CD8-positive, alpha-beta T cell (primary cell): ENCODE measurements at regions of chr5 and their contacts with region 1.

Region 1: DNA sequence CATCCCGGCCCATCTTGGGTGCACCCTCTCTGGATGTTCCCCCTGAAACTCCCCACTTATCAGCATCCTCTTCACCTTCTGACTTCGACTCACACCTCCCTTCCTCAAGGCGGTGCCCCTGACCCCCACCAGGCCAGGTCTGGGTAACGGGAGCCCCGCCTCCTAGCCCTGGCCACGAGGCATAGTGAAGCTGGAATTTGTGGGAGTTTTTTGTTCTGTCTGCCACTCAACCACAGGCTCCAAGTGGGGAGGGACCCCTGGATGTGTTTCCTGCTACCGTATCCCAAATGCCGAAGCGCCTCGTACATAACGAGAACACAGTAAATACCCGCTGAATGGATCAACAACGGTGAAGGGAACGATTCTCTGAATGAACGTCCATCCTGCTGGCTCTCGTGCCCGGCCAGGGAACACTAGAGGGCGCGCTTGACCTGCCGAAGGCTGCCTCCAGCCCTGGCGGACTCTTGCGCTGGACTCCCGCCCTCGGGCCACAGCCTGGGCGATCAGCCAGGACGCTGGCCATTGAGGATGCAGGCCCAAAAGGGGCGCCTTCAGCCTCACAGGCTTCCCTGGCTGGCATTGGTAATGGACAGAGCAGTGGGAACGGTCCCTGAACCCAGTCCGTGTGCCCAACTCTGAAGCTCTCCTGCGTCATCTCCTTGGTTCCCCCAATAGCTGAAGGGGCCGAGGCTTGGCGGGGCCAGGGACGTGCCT is 47.3 kb upstream of the PHYKPL start:
- DNase-seq: peak; percentile 31 to 78 (median 61)
- ATAC-seq: no peak
- H3K4me3 ChIP-seq: no peak overlapping the region
- H3K4me3 Mint-ChIP-seq: no peak overlapping the region
- H3K27ac ChIP-seq: no peak overlapping the region
- H3K27ac Mint-ChIP-seq: no peak overlapping the region
- H3K4me1 ChIP-seq: no peaks in the 10 kb centered on the region
- H3K4me1 Mint-ChIP-seq: peaks cover 4% of the 10 kb centered on the region
- H3K27me3 ChIP-seq: no peaks in the 10 kb centered on the region
- H3K27me3 Mint-ChIP-seq: no peaks in the 10 kb centered on the region
- CTCF ChIP-seq: peak; percentile 51

Region 2: DNA sequence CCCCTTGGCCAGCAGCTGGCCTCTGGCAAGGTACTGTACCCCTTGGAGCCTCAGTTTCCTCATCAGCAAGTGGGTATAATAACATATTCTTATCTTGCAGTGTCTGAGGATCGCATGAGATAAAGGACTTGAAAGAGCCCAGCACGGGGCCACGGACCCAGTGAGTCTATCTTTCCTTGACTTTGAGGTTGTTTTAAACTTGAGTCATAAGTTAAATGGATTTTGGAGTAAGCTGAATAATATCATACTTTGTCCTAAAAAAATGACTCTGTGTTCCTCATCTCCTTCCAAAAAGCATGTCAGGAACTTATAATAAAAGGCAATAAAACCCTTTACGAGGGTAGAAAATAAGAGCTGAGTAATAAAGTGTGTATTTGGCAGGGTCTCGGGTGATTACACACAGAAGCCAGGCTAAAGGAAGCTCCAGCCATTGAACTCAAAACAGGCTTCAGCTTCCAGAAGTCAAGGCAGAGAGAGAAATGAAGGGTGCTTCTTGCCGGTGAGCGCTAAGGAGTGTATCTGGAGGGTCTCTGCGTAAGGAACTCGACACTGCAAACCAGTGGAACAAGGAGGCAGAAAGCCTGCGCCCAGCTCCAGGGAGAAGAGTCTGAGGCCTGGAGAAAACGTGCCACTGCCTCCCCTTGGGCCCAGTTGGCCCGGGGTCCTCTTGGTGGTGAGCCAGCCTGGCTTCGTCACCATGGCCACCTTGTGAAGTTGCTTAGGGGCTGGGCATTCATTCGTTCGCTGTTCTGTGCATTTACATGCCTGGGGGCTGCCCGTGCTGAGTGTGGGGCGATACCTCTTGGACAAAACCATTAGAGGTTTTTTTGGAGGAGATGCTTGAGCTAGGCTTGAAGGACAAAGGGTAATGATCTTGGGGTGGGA is 25.1 kb after region 1 on chr5:
- CTCF ChIA-PET with region 1: no interaction called
- POLR2A ChIA-PET with region 1: no interaction called
- intact Hi-C with region 1: no loop called
- DNase-seq: no peak
- ATAC-seq: no peak
- H3K4me3 ChIP-seq: no peak overlapping the region
- H3K4me3 Mint-ChIP-seq: no peak overlapping the region
- H3K27ac ChIP-seq: no peak overlapping the region
- H3K27ac Mint-ChIP-seq: no peak overlapping the region
- H3K4me1 ChIP-seq: no peaks in the 10 kb centered on the region
- H3K4me1 Mint-ChIP-seq: no peaks in the 10 kb centered on the region
- H3K27me3 ChIP-seq: no peaks in the 10 kb centered on the region
- H3K27me3 Mint-ChIP-seq: peaks cover 6% of the 10 kb centered on the region
- CTCF ChIP-seq: no peak

Region 3: GRCh38 chr5:178551059-178551458 is 271.2 kb after region 1 on chr5:
- CTCF ChIA-PET with region 1: interaction called, 24 read pairs
- POLR2A ChIA-PET with region 1: no interaction called
- intact Hi-C with region 1: loop called in 1 of 2 experiments (anchors 2 kb)
- DNase-seq: peak in 1 of 9 experiments; percentile 19
- ATAC-seq: no peak
- H3K4me3 ChIP-seq: no peak overlapping the region
- H3K4me3 Mint-ChIP-seq: no peak overlapping the region
- H3K27ac ChIP-seq: no peak overlapping the region
- H3K27ac Mint-ChIP-seq: no peak overlapping the region
- H3K4me1 ChIP-seq: no peaks in the 10 kb centered on the region
- H3K4me1 Mint-ChIP-seq: no peaks in the 10 kb centered on the region
- H3K27me3 ChIP-seq: no peaks in the 10 kb centered on the region
- H3K27me3 Mint-ChIP-seq: peaks cover 10% of the 10 kb centered on the region
- CTCF ChIP-seq: peak; percentile 29

Region 4: DNA sequence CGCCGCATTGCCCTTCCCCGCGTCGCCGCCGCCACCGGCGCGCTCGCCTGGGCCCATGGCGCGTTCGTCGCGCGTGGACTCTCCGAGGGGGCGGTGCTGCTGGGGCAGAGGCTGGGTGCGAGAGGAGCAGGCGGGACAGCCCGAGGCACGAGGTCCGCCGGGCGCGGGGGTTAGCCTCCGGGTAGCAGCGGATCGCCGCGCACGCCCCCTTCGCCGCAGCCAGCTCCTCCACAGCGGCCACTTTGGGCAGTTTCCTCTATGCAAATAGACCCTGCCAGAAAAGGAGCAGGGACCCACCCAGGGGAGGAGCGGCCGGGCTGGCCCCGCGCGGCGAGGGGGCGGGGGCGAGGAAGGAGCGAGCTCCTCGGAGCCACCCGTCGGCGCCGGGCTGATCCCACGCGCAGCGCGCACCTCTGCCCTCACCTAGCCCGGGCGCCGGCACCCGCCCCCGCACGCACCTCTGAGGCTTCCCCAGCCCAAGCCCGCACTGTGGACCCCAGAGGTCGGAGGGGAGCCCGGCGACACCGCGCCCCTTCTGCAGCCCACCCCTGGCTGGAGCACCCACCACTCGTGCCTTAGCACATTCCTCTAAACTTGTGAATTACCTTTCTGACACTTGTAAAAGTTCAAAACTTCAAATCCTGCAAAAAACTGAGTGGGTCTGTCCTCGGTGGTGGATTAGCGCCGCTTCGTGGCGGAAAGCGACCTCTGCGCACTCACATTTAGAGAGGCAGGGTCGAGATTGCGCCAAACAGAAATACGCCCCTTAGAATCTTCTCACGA is 310.4 kb after region 1 on chr5 and contains the start of gene COL23A1:
- CTCF ChIA-PET with region 1: interaction called, 4 read pairs
- POLR2A ChIA-PET with region 1: no interaction called
- intact Hi-C with region 1: loop called in 1 of 2 experiments (anchors 1 kb)
- DNase-seq: peak in 8 of 9 experiments; percentile 20 to 70 (median 55)
- ATAC-seq: peak; percentile 85
- H3K4me3 ChIP-seq: peak within 1 kb of the TSS; percentile 12 to 38
- H3K4me3 Mint-ChIP-seq: peak within 1 kb of the TSS; percentile 81
- H3K27ac ChIP-seq: no peak within 1 kb of the TSS
- H3K27ac Mint-ChIP-seq: no peak within 1 kb of the TSS
- H3K4me1 ChIP-seq: peaks cover 12% of the 10 kb centered on the region
- H3K4me1 Mint-ChIP-seq: peaks cover 6% of the 10 kb centered on the region
- H3K27me3 ChIP-seq: peaks cover 5 to 13% of the 10 kb centered on the region in 2 experiments
- H3K27me3 Mint-ChIP-seq: peaks cover 45% of the 10 kb centered on the region
- CTCF ChIP-seq: peak; percentile 62
- total RNA-seq, gene COL23A1: not detected

Region 5: GRCh38 chr5:178838695-178839685 is 559.1 kb after region 1 on chr5:
- CTCF ChIA-PET with region 1: no interaction called
- POLR2A ChIA-PET with region 1: no interaction called
- intact Hi-C with region 1: loop called in 1 of 2 experiments (anchors 1 kb)
- DNase-seq: peak; percentile 6 to 65 (median 45)
- ATAC-seq: peak; percentile 63
- H3K4me3 ChIP-seq: no peak overlapping the region
- H3K4me3 Mint-ChIP-seq: no peak overlapping the region
- H3K27ac ChIP-seq: no peak overlapping the region
- H3K27ac Mint-ChIP-seq: no peak overlapping the region
- H3K4me1 ChIP-seq: no peaks in the 10 kb centered on the region
- H3K4me1 Mint-ChIP-seq: no peaks in the 10 kb centered on the region
- H3K27me3 ChIP-seq: no peaks in the 10 kb centered on the region
- H3K27me3 Mint-ChIP-seq: peaks cover 3% of the 10 kb centered on the region
- CTCF ChIP-seq: peak; percentile 20

Region 6: DNA sequence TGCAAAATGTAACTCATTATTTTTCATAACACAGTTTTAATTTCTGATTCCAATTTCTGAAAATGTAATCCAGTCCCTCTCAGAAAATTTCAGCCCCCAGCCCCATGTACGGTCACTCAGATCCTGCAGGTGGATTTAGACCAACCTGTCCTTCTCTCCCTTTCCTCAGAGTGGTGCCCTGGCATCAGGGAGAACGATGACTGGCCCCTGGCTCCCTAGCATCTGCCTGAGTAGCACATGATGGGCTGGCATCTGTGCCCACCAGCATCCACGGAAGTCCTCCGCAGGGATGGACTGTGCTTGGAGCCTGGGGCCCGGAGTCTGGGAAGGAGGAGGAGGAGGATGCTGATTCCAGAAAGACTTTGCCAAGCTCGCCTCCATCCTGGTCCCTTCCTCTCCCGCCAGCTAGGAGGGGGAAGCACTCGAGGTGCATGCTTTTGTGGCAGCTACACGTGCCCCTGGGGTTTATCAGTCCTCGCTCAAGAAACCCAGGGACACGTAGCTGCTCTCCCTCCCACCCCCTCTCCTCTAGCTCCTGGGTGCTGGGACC is 1216.1 kb after region 1 on chr5:
- CTCF ChIA-PET with region 1: interaction called, 6 read pairs
- POLR2A ChIA-PET with region 1: no interaction called
- intact Hi-C with region 1: loop called in 1 of 2 experiments (anchors 2 kb)
- DNase-seq: no peak
- ATAC-seq: no peak
- H3K4me3 ChIP-seq: no peak overlapping the region
- H3K4me3 Mint-ChIP-seq: no peak overlapping the region
- H3K27ac ChIP-seq: no peak overlapping the region
- H3K27ac Mint-ChIP-seq: no peak overlapping the region
- H3K4me1 ChIP-seq: no peaks in the 10 kb centered on the region
- H3K4me1 Mint-ChIP-seq: no peaks in the 10 kb centered on the region
- H3K27me3 ChIP-seq: no peaks in the 10 kb centered on the region
- H3K27me3 Mint-ChIP-seq: no peaks in the 10 kb centered on the region
- CTCF ChIP-seq: no peak